Endothelial cell of umbilical vein (primary cell): ENCODE measurements at regions of chr22 and their contacts with region 1.

Region 1: GRCh38 chr22:28935713-28936112 is 52.3 kb downstream of the ZNRF3 start:
- DNase-seq: no peak
- H3K4me3 ChIP-seq: no peak overlapping the region
- H3K27ac ChIP-seq: no peak overlapping the region
- H3K4me1 ChIP-seq: peaks cover 8% of the 10 kb centered on the region
- H3K27me3 ChIP-seq: no peaks in the 10 kb centered on the region
- CTCF ChIP-seq: peak in 1 of 2 donors; percentile 21
- POLR2A ChIP-seq: no peak

Region 2: GRCh38 chr22:28741758-28742561 is 193.8 kb before region 1 on chr22 and contains the starts of genes CHEK2 and HSCB:
- CTCF ChIA-PET with region 1: no interaction called
- POLR2A ChIA-PET with region 1: no interaction called
- dilution Hi-C with region 1: no loop called
- intact Hi-C with region 1: no loop called
- DNase-seq: peak; percentile 99
- H3K4me3 ChIP-seq: peak within 1 kb of the TSS; percentile 75 to 87 (median 77)
- H3K27ac ChIP-seq: peak within 1 kb of the TSS; percentile 84
- H3K4me1 ChIP-seq: peaks cover 12% of the 10 kb centered on the region
- H3K27me3 ChIP-seq: no peaks in the 10 kb centered on the region
- CTCF ChIP-seq: peak in 1 of 2 donors; percentile 11
- POLR2A ChIP-seq: no peak
- total RNA-seq, gene CHEK2: 24.6 and 27.4 TPM in 2 replicates
- total RNA-seq, gene HSCB: 14.1 and 20.3 TPM in 2 replicates

Region 3: GRCh38 chr22:28882878-28883656 is 52.6 kb before region 1 on chr22 and contains the start of gene ZNRF3:
- CTCF ChIA-PET with region 1: interaction called, 4 read pairs
- POLR2A ChIA-PET with region 1: no interaction called
- dilution Hi-C with region 1: no loop called
- intact Hi-C with region 1: loop called (anchors 5 kb)
- DNase-seq: peak; percentile 79
- H3K4me3 ChIP-seq: peak within 1 kb of the TSS; percentile 51 to 72 (median 54)
- H3K27ac ChIP-seq: no peak within 1 kb of the TSS
- H3K4me1 ChIP-seq: peaks cover 11% of the 10 kb centered on the region
- H3K27me3 ChIP-seq: no peaks in the 10 kb centered on the region
- CTCF ChIP-seq: no peak
- POLR2A ChIP-seq: peak; percentile 60
- total RNA-seq, gene ZNRF3: 4.4 and 5.2 TPM in 2 replicates